RWPE1 (cell line): ENCODE measurements at regions of chr20 and their contacts with region 1.

Region 1: GRCh38 chr20:45362804-45363610 is at the start of gene SYS1:
- DNase-seq: peak; percentile 100
- H3K27ac ChIP-seq: peak within 1 kb of the TSS; percentile 90
- CTCF ChIP-seq: peak; percentile 100

Region 2: GRCh38 chr20:45341939-45342859 is 20.8 kb before region 1 on chr20:
- CTCF ChIA-PET with region 1: interaction called, 18 read pairs
- POLR2A ChIA-PET with region 1: interaction called, 14 read pairs
- DNase-seq: peak; percentile 55
- H3K27ac ChIP-seq: peak overlapping the region; percentile 97
- CTCF ChIP-seq: no peak

Region 3: GRCh38 chr20:45347936-45348778 is 14.8 kb before region 1 on chr20 and contains the start of gene SDC4:
- CTCF ChIA-PET with region 1: interaction called, 17 read pairs
- POLR2A ChIA-PET with region 1: interaction called, 14 read pairs
- DNase-seq: peak; percentile 99
- H3K27ac ChIP-seq: peak within 1 kb of the TSS; percentile 97
- CTCF ChIP-seq: no peak

Region 4: GRCh38 chr20:45373353-45374100 is 10.5 kb after region 1 on chr20:
- CTCF ChIA-PET with region 1: interaction called, 35 read pairs
- POLR2A ChIA-PET with region 1: interaction called, 7 read pairs
- DNase-seq: peak; percentile 93
- H3K27ac ChIP-seq: peak overlapping the region; percentile 51
- CTCF ChIP-seq: peak; percentile 98

Region 5: DNA sequence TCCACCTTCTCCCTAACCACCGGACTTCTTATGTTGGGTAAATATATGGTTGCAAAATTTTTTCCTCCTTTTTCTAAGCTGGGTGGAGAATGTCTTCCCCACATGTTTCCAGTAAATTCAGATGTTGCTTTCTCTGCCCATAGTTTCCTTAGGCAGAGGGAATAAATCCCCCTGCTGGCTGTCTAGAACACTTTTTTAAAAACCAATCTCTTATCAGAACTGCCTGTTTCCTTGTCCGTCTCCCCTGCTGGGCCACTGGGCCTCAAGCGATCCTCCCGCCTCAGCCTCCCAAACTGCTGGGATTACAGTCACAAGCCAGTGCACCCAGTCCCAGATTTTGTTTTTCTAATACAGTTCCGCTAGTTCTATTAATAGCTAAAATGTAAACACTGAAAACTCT is 96.6 kb after region 1 on chr20:
- CTCF ChIA-PET with region 1: no interaction called
- POLR2A ChIA-PET with region 1: no interaction called
- DNase-seq: no peak
- H3K27ac ChIP-seq: no peak overlapping the region
- CTCF ChIP-seq: no peak